Activated CD4-positive, alpha-beta T cell treated with anti-CD3 and anti-CD28 coated beads for 36 hours (primary cell): ENCODE measurements at regions of chr1 and their contacts with region 1.

Region 1: DNA sequence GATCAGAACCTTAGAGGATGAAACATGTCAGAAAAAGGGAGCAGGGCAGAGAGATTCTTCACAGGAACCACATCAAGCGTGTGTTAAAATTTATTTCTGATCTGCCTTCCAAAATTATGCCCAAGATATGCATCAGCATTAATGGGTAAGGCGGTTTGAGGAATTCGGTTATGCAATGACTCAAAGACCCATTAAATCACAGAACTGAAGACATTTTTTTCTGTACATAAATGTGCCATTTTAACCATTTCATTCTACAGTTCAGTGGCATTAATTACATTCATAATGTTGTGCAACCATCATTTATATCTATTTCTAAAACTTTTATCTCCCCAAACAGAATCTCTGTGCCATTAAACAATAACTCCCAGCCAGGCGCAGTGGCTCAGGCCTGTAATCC is 43.4 kb downstream of the CNST start:
- DNase-seq: no peak
- ATAC-seq: no peak
- H3K4me3 Mint-ChIP-seq: no peak overlapping the region
- H3K27ac Mint-ChIP-seq: no peak overlapping the region
- H3K4me1 Mint-ChIP-seq: peaks cover 46% of the 10 kb centered on the region
- H3K27me3 Mint-ChIP-seq: no peaks in the 10 kb centered on the region

Region 2: GRCh38 chr1:246506674-246507481 is 102.8 kb before region 1 on chr1 and contains the start of gene SMYD3:
- CTCF ChIA-PET with region 1: no interaction called
- POLR2A ChIA-PET with region 1: no interaction called
- intact Hi-C with region 1: no loop called
- DNase-seq: peak; percentile 84
- ATAC-seq: peak; percentile 93
- H3K4me3 Mint-ChIP-seq: peak within 1 kb of the TSS; percentile 78
- H3K27ac Mint-ChIP-seq: peak within 1 kb of the TSS; percentile 89
- H3K4me1 Mint-ChIP-seq: peaks cover 26% of the 10 kb centered on the region
- H3K27me3 Mint-ChIP-seq: no peaks in the 10 kb centered on the region
- total RNA-seq, gene SMYD3: 17.2 to 18.4 TPM

Region 3: GRCh38 chr1:246624091-246624490 is 14.5 kb after region 1 on chr1:
- CTCF ChIA-PET with region 1: no interaction called
- POLR2A ChIA-PET with region 1: no interaction called
- intact Hi-C with region 1: loop called in 1 of 2 experiments (anchors 2 kb)
- DNase-seq: no peak
- ATAC-seq: no peak
- H3K4me3 Mint-ChIP-seq: no peak overlapping the region
- H3K27ac Mint-ChIP-seq: no peak overlapping the region
- H3K4me1 Mint-ChIP-seq: peaks cover 8% of the 10 kb centered on the region
- H3K27me3 Mint-ChIP-seq: no peaks in the 10 kb centered on the region

Region 4: GRCh38 chr1:246642719-246643118 is 33.1 kb after region 1 on chr1:
- CTCF ChIA-PET with region 1: no interaction called
- POLR2A ChIA-PET with region 1: no interaction called
- intact Hi-C with region 1: no loop called
- DNase-seq: no peak
- ATAC-seq: no peak
- H3K4me3 Mint-ChIP-seq: no peak overlapping the region
- H3K27ac Mint-ChIP-seq: no peak overlapping the region
- H3K4me1 Mint-ChIP-seq: peaks cover 3% of the 10 kb centered on the region
- H3K27me3 Mint-ChIP-seq: no peaks in the 10 kb centered on the region